AG04450 (cell line): ENCODE measurements at regions of chr3 and their contacts with region 1.

Region 1: DNA sequence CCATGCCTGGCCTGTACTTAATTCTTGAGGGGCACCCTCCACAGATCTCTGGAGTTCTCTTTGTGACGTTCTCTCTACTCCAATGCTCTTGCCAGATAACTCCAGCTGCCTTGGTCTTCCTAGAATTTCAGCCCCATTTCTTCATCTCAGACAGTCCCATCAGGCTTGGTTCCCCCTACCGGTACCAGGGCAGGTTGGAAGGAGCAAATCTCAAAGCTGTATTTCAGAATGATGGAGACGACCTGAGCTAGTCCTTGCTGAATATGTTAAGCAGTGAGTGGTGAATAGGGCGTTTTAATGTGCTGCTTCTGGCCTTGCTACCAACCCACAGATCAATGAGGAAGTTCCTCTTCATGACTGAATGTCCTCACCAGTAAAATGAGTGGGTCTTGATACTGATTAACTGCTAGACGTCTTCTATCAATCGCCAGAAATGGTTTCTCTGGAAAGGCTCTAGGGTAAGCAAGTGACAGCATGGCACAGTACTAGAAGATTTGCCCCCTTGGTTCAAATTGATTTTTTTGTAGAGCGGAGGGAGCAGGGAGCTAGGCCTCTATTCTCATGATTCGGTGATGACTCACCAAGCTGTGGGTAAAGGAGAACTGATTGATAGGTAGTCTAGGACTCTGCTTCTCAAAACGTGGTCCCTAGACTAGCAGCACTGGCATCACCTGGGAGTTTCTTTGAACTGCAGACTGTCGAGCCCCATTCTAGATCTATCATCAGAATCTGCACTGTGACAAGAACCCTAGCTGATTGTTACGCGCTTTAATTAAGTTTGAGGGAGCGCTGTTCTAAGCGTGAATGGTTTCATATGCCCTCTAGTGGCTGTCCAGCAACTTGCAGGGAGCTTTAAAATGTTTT is 67.8 kb downstream of the UBP1 start:
- DNase-seq: no peak
- H3K4me3 ChIP-seq: no peak overlapping the region
- H3K27ac ChIP-seq: no peak overlapping the region
- H3K27me3 ChIP-seq: no peaks in the 10 kb centered on the region
- CTCF ChIP-seq: peak; percentile 95

Region 2: GRCh38 chr3:33113772-33114621 is 258.5 kb before region 1 on chr3 and contains the start of gene CRTAP:
- CTCF ChIA-PET with region 1: interaction called, 17 read pairs
- POLR2A ChIA-PET with region 1: no interaction called
- DNase-seq: peak; percentile 87
- H3K4me3 ChIP-seq: peak within 1 kb of the TSS; percentile 80
- H3K27ac ChIP-seq: peak within 1 kb of the TSS; percentile 88
- H3K27me3 ChIP-seq: no peaks in the 10 kb centered on the region
- CTCF ChIP-seq: no peak
- polyA plus RNA-seq, gene CRTAP: 314 and 338 TPM in 2 replicates

Region 3: GRCh38 chr3:33131331-33132018 is 241.0 kb before region 1 on chr3:
- CTCF ChIA-PET with region 1: interaction called, 387 read pairs
- POLR2A ChIA-PET with region 1: interaction called, 15 read pairs
- DNase-seq: peak; percentile 41
- H3K4me3 ChIP-seq: no peak overlapping the region
- H3K27ac ChIP-seq: no peak overlapping the region
- H3K27me3 ChIP-seq: no peaks in the 10 kb centered on the region
- CTCF ChIP-seq: peak; percentile 72

Region 4: GRCh38 chr3:33277193-33277882 is 95.1 kb before region 1 on chr3 and contains the start of gene FBXL2:
- CTCF ChIA-PET with region 1: interaction called, 10 read pairs
- POLR2A ChIA-PET with region 1: no interaction called
- DNase-seq: peak; percentile 2
- H3K4me3 ChIP-seq: peak within 1 kb of the TSS; percentile 63
- H3K27ac ChIP-seq: no peak within 1 kb of the TSS
- H3K27me3 ChIP-seq: no peaks in the 10 kb centered on the region
- CTCF ChIP-seq: no peak
- polyA plus RNA-seq, gene FBXL2: 14.4 and 14.9 TPM in 2 replicates

Region 5: DNA sequence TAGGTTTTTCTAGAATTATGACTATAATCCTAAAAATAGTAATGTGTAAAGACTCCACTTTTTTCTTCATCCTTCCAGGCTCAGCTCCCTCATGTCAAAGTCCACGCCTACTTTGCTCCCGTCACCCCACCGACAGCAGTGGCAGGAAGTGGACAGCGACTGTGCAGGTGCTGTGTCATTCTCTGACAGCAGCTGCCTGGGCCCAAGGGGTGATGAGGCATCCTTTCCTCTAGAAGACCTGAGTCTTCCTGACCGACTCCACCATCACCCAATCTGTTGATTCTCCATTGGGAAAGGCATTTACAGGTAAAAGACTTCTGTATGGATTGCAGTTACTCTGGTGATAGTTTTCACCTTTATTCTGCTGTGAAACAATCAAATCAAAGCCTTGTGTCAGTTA is 13.0 kb after region 1 on chr3:
- CTCF ChIA-PET with region 1: interaction called, 38 read pairs
- POLR2A ChIA-PET with region 1: no interaction called
- DNase-seq: no peak
- H3K4me3 ChIP-seq: no peak overlapping the region
- H3K27ac ChIP-seq: no peak overlapping the region
- H3K27me3 ChIP-seq: no peaks in the 10 kb centered on the region
- CTCF ChIP-seq: no peak

Region 6: DNA sequence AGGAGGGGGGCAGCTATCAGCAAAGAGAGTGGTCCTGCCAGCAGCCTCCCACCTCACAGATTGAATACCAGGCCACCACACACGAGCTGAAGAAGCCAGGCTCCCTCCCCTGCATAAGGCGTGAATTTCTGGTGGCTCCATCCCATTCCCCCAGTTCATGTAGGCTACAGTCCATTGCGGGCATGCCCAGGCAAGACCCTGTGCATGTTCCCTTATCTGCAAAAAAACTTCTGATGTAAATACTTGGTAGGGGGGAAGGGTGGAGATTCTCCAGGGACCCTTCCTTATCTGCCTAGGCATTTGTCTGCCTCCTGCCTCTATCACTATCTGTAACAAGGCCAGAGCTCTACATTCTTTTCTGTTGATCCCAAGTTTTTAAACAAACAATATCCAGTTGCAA is 95.3 kb after region 1 on chr3:
- CTCF ChIA-PET with region 1: no interaction called
- POLR2A ChIA-PET with region 1: no interaction called
- DNase-seq: no peak
- H3K4me3 ChIP-seq: no peak overlapping the region
- H3K27ac ChIP-seq: no peak overlapping the region
- H3K27me3 ChIP-seq: no peaks in the 10 kb centered on the region
- CTCF ChIP-seq: no peak

Region 7: DNA sequence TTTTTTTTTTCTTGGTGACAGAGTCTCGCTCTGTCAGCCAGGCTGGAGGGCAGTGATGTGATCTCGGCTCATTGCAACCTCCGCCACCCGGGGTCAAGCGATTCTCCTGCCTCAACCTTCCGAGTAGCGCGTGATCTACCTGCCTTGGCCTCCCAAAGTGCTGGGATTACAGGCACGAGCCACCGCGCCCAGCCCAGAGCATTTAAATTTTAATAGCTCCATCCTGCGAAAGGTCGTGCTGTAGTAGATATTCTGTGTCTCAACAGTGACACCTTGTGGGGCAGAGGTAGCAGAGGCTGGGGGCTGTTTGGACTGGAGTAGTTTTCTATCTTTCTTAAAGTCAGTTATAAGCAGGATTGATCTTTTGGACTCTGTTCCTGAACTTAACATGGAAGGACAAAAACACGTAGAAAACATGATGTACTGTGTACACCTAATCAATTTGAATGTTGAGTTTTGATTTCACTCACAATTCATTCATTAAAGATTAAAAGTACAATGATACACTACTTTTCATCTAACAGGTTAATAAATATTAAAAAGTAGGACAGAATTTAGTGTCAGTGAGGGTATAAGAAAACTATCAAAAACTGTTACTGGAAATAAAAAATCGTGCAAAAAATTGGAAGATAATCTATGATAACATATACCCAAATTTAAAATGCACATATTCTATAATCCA is 415.0 kb after region 1 on chr3:
- CTCF ChIA-PET with region 1: interaction called, 11 read pairs
- POLR2A ChIA-PET with region 1: no interaction called
- DNase-seq: peak; percentile 32
- H3K4me3 ChIP-seq: peak overlapping the region; percentile 49
- H3K27ac ChIP-seq: no peak overlapping the region
- H3K27me3 ChIP-seq: no peaks in the 10 kb centered on the region
- CTCF ChIP-seq: peak; percentile 88